Astrocyte of the spinal cord (primary cell): ENCODE measurements at regions of chr16 and their contacts with region 1.

Region 1: GRCh38 chr16:87062569-87063442 is 254.4 kb downstream of the C16orf95 start:
- DNase-seq: peak; percentile 80
- H3K4me3 ChIP-seq: peak overlapping the region; percentile 17
- CTCF ChIP-seq: peak; percentile 82

Region 2: DNA sequence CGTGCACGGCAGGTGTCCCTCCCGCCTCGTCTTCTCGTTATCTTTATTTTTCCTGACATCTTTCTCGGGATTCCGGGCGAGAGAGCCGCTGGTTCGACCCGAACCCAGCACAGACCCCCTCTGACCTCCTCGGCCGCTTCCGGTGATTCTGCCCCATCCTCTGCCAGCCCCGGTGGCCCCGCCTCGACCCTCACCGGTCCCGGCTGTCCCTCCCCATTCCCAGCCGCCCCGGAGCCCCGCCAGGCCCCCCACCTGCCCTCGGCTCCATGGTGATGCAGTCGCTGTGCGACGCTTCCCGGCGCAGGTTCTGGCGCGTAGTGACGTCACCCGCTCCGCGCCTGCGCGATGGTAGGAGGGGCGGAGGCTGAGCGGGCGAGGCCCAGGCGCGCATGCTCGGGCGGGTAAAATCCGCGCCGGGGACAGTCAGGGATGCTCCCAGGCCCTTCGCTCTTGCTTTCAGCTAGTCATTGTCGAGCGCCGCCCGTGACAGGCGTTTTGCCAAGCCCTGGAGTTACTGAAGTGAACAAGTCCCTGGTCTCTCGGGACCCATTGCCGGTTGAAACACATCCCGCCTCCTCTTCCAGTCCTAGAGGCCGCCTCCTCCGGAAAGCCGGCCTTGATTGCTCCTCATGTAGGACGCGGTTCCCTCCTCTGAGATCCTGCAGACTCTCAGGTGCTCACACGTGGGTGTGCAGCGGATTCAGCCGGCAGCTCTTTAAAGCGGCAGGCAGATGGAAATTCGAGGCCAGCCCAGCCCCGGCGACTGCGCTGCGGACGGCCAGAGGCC is 507.7 kb before region 1 on chr16 and contains the start of gene MTHFSD:
- in situ Hi-C with region 1: loop called (anchors 25 kb)
- DNase-seq: peak; percentile 91
- H3K4me3 ChIP-seq: peak within 1 kb of the TSS; percentile 99
- CTCF ChIP-seq: no peak

Region 3: GRCh38 chr16:87172632-87173031 is 109.8 kb after region 1 on chr16:
- in situ Hi-C with region 1: no loop called
- DNase-seq: no peak
- H3K4me3 ChIP-seq: no peak overlapping the region
- CTCF ChIP-seq: peak; percentile 23